ENCODE measurements at regions of chr18 and their contacts with region 1.

Region 1: DNA sequence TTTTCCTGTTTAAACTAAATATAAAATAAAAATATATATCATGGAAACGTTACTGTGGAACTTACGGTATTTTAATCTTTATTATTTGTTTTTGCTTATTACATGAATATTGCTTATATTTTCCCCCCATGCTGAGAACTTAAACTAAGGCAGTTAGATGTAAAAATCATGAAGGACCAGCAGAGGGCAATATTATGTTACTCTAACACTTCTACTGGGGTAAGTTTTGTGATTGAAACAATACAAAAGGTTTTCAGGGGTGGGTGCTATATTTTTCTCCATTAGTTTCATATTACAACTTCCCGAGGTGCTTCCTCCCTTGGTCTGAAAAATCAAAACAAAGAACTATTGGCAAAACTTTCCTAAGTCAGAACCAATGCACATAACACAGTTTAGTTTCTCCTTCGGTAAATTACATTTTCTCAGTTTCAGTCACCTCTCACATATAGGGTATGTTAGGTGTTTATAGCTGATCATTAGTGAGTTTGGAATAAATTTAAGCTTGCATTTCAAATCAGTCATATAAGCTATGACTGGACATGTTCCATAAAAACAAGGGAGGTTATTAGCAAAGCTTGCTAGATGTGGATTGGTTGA is 54.8 kb downstream of the ZNF407 start:
- DNase-seq: no peak
- ATAC-seq: no peak
- H3K4me3 Mint-ChIP-seq: no peak overlapping the region
- H3K27ac Mint-ChIP-seq: no peak overlapping the region
- H3K4me1 Mint-ChIP-seq: no peaks in the 10 kb centered on the region
- H3K27me3 Mint-ChIP-seq: no peaks in the 10 kb centered on the region
- CTCF ChIP-seq: no peak

Region 2: GRCh38 chr18:74281639-74282358 is 370.7 kb before region 1 on chr18:
- CTCF ChIA-PET with region 1: no interaction called
- POLR2A ChIA-PET with region 1: no interaction called
- intact Hi-C with region 1: no loop called
- DNase-seq: no peak
- ATAC-seq: no peak
- H3K4me3 Mint-ChIP-seq: no peak overlapping the region
- H3K27ac Mint-ChIP-seq: no peak overlapping the region
- H3K4me1 Mint-ChIP-seq: peaks cover 51% of the 10 kb centered on the region
- H3K27me3 Mint-ChIP-seq: no peaks in the 10 kb centered on the region
- CTCF ChIP-seq: no peak

Region 3: GRCh38 chr18:74963820-74964446 is 311.4 kb after region 1 on chr18:
- CTCF ChIA-PET with region 1: interaction called, 3 read pairs
- POLR2A ChIA-PET with region 1: no interaction called
- intact Hi-C with region 1: loop called (anchors 1 kb)
- DNase-seq: no peak
- ATAC-seq: no peak
- H3K4me3 Mint-ChIP-seq: no peak overlapping the region
- H3K27ac Mint-ChIP-seq: no peak overlapping the region
- H3K4me1 Mint-ChIP-seq: no peaks in the 10 kb centered on the region
- H3K27me3 Mint-ChIP-seq: no peaks in the 10 kb centered on the region
- CTCF ChIP-seq: no peak

Region 4: GRCh38 chr18:75365837-75366236 is 713.3 kb after region 1 on chr18:
- CTCF ChIA-PET with region 1: no interaction called
- POLR2A ChIA-PET with region 1: no interaction called
- intact Hi-C with region 1: loop called (anchors 1 kb)
- DNase-seq: no peak
- ATAC-seq: no peak
- H3K4me3 Mint-ChIP-seq: no peak overlapping the region
- H3K27ac Mint-ChIP-seq: no peak overlapping the region
- H3K4me1 Mint-ChIP-seq: no peaks in the 10 kb centered on the region
- H3K27me3 Mint-ChIP-seq: no peaks in the 10 kb centered on the region
- CTCF ChIP-seq: no peak

Region 5: GRCh38 chr18:75478996-75479880 is 826.7 kb after region 1 on chr18:
- CTCF ChIA-PET with region 1: interaction called, 23 read pairs
- POLR2A ChIA-PET with region 1: no interaction called
- intact Hi-C with region 1: loop called (anchors 1 kb)
- DNase-seq: no peak
- ATAC-seq: no peak
- H3K4me3 Mint-ChIP-seq: no peak overlapping the region
- H3K27ac Mint-ChIP-seq: no peak overlapping the region
- H3K4me1 Mint-ChIP-seq: no peaks in the 10 kb centered on the region
- H3K27me3 Mint-ChIP-seq: no peaks in the 10 kb centered on the region
- CTCF ChIP-seq: no peak

Region 6: DNA sequence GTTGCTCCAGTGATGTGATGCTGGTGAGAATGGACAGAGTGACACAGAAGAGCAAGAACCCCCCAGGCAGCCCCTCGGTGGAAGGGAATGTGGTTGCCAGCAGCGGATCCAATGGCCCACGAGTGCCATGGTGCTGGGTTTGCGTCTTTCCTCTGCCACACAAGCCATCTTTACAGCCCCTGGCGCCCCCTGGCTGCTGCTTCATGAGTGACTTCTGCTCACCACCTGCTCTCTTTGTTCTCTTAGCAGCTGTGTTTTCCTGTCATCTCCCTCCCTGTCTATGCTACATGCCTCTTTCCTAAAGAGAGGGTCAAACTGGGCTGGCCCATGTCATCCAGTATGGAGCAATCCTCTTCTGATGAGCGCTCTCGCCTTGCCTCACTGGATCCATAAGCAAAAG is 1075.0 kb after region 1 on chr18:
- CTCF ChIA-PET with region 1: no interaction called
- POLR2A ChIA-PET with region 1: no interaction called
- intact Hi-C with region 1: loop called (anchors 1 kb)
- DNase-seq: no peak
- ATAC-seq: no peak
- H3K4me3 Mint-ChIP-seq: no peak overlapping the region
- H3K27ac Mint-ChIP-seq: no peak overlapping the region
- H3K4me1 Mint-ChIP-seq: no peaks in the 10 kb centered on the region
- H3K27me3 Mint-ChIP-seq: no peaks in the 10 kb centered on the region
- CTCF ChIP-seq: no peak

Region 7: DNA sequence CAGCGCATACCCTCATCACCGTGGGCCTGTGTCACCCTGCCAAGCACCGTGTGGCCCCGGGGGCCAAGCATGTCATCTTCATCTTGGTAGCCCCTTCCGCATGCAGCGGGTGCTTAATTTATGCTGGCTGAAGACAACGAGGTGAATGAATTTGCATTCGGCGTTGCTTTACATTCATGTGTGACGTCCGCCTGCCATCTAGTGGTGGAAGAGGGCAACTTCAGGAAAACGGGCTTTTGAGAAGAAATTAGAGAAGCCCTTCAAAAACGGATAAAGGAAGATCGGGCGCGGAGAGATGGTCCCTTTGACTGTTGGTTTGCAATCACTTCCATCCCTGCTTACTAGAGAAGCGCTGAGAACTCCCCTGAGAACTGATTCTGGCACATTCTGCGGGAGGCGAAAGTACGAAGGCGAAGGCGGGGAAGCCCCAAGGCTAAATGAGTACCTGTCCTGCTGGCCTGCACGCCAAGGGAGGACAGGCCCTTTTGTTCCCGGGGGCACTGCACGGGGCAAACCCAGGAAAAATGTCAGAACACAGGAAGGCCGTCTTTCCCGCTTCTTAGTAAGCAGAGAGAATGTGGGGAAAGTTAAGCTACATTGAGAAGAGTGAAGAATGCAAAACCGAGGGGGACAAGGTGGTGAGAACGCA is 1696.7 kb after region 1 on chr18:
- CTCF ChIA-PET with region 1: no interaction called
- POLR2A ChIA-PET with region 1: no interaction called
- intact Hi-C with region 1: loop called (anchors 1 kb)
- DNase-seq: peak; percentile 38
- ATAC-seq: peak; percentile 28
- H3K4me3 Mint-ChIP-seq: peak overlapping the region; percentile 36
- H3K27ac Mint-ChIP-seq: no peak overlapping the region
- H3K4me1 Mint-ChIP-seq: peaks cover 7% of the 10 kb centered on the region
- H3K27me3 Mint-ChIP-seq: peaks cover 3% of the 10 kb centered on the region
- CTCF ChIP-seq: no peak

Measured in activated B cell treated with CpG ODN at 0.5 μM for 24 hours (primary cell).